Naive thymus-derived CD8-positive, alpha-beta T cell (primary cell): ENCODE measurements at regions of chr12 and their contacts with region 1.

Region 1: DNA sequence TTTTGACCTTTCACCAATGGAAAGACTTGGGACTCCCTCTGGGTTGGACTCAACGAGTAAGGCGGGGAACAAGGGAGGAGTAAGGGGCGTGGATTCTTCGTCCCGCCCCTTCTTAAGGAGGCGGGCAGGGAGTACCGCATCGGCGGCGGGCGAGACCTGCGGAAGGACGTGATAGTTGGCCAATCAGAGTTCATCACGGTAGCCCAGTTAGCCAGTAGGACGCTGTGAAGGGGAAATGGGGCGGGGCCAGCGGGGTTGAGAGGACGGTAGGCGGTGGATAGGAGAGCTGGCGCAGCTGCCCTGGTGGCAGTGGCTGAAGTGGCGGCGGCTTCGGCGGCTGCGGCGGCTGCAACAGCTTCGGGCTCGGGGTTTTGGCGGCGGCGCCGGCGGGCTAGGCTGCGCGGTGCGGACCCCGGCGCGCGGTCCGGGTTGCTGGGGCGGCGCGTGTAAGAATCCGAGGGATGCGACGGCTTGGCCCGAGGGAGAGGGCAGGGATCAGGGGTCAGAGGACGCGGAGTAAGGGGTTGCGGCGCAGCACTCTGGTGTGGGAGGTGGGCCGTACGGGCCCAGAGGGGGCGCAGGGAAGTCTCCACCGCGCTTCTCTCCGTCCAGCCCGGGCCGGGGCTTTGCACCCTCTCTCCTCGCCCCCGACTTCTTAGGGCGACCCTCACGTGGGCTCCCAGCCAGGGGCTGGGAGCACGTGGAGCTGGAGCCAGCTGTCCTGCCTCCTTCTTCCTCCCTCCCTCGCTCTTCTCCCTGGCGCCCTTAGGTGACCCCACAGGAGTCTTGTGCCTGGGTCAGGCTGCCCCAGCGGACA is at the start of gene TPCN1:
- DNase-seq: peak; percentile 95 to 99 (median 98)
- ATAC-seq: peak; percentile 93 to 95
- H3K4me3 Mint-ChIP-seq: peak within 1 kb of the TSS; percentile 85 to 95 (median 92)
- H3K27ac Mint-ChIP-seq: peak within 1 kb of the TSS; percentile 88 to 96 (median 94)
- H3K4me1 Mint-ChIP-seq: peaks cover 20 to 43% (median 41%) of the 10 kb centered on the region in 4 donors
- H3K27me3 Mint-ChIP-seq: no peaks in the 10 kb centered on the region
- polyA plus RNA-seq, gene TPCN1: 6.7 to 16.5 (median 11.0) TPM

Region 2: GRCh38 chr12:112148031-112148513 is 1073.3 kb before region 1 on chr12:
- POLR2A ChIA-PET with region 1: interaction called, 11 read pairs
- DNase-seq: no peak
- ATAC-seq: no peak
- H3K4me3 Mint-ChIP-seq: no peak overlapping the region
- H3K27ac Mint-ChIP-seq: peak overlapping the region in 2 of 10 donors; percentile 44 to 77
- H3K4me1 Mint-ChIP-seq: peaks cover 3 to 13% (median 7%) of the 10 kb centered on the region in 4 donors
- H3K27me3 Mint-ChIP-seq: no peaks in the 10 kb centered on the region

Region 3: DNA sequence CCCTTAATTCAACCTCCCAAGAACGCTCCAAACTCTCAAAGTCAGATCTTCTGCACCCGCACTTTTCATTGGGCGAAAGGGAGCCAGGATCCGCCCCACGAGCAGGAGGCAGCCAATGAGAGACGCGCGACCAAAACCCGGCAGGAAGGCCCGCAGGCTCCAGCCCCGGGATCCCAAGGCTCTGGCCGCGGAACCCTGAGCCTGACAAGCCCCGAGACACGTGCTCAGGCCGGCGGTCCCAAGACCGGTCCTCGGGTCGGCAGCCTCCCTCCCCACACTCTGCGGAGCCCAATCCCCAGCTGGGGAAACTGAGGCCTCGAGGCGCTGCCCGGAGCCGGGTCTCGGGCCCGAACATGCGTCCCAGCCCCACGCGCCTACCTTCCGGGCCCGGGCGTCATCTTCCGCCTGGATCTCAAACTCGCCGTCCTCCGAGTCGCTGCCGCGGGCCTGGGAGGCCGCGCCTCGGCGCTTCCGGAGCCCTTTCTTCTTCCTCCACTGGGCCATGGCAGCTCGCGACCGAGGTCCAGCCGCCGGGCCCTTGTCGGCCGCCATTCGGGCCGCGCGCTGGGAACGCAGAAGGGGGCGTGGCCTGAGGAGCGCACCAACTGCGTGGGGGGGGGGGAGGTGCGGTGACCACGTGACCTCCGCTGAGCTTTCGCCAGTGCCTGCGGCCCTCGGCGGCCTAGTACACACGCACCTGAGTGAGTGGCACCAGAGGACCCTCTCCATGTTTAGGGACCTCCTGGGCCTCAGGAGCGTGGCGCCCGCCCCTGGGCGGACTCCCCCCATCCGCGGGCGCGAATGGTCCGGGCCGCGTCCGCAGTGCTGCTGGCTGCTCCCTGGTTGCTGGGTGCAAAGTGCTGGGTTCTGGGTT is 36.3 kb before region 1 on chr12 and contains the starts of genes DDX54 and RITA1:
- POLR2A ChIA-PET with region 1: interaction called, 19 read pairs
- DNase-seq: peak; percentile 78 to 97 (median 87)
- ATAC-seq: peak; percentile 85 to 87
- H3K4me3 Mint-ChIP-seq: peak within 1 kb of the TSS; percentile 90 to 99 (median 95)
- H3K27ac Mint-ChIP-seq: peak within 1 kb of the TSS; percentile 92 to 98 (median 96)
- H3K4me1 Mint-ChIP-seq: peaks cover 19 to 52% (median 39%) of the 10 kb centered on the region in 4 donors
- H3K27me3 Mint-ChIP-seq: no peaks in the 10 kb centered on the region
- polyA plus RNA-seq, gene DDX54: 17.9 to 38.2 (median 24.3) TPM
- polyA plus RNA-seq, gene RITA1: 22.9 to 26.2 (median 24.6) TPM

Region 4: DNA sequence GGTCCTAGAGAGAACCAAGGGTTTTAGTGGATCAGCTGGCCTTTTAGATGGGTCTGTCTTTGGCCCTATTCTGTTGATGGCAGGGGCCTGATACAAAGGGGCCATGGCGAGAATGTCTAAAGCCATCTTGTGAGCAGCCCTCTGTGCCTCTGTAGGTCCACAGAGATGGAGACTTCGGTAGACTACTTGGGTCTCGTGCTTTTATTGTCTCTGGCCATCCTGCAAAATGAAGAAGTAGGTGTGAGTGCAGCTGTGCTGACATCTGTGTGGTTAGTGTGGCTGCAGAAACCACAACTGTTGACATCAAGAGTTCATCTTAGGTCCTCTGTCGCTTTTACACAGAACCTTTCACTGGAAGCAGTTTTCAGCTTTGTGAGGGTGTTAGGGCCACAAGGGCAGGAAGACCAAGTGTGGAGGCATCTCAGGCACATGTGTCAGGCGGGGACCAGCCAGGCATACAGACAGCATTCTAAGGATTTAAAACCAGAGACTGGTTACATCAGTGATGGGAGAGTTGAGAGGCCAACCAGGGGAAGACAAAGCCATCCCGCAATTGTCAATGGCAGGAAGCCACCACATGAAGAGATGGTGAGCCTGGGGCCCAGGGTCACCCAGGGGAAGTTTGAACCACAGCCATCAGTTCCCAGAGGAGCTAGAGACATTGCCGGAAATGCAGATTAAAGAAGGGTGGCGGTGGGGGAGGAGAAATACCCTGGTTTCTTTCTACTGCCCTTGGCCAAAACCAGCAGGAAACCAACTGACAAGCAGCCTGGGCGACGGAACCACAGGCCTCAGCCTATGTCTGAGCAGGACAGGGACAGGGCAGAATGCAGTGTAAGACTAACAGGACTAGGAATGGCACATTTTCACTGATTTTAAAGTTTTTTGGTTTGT is 13.1 kb before region 1 on chr12:
- POLR2A ChIA-PET with region 1: interaction called, 24 read pairs
- DNase-seq: peak in 9 of 10 donors; percentile 34 to 76 (median 70)
- ATAC-seq: peak; percentile 80 to 81
- H3K4me3 Mint-ChIP-seq: peak overlapping the region; percentile 53 to 84 (median 77)
- H3K27ac Mint-ChIP-seq: peak overlapping the region; percentile 84 to 97 (median 92)
- H3K4me1 Mint-ChIP-seq: peaks cover 21 to 55% (median 41%) of the 10 kb centered on the region in 4 donors
- H3K27me3 Mint-ChIP-seq: no peaks in the 10 kb centered on the region

Region 5: DNA sequence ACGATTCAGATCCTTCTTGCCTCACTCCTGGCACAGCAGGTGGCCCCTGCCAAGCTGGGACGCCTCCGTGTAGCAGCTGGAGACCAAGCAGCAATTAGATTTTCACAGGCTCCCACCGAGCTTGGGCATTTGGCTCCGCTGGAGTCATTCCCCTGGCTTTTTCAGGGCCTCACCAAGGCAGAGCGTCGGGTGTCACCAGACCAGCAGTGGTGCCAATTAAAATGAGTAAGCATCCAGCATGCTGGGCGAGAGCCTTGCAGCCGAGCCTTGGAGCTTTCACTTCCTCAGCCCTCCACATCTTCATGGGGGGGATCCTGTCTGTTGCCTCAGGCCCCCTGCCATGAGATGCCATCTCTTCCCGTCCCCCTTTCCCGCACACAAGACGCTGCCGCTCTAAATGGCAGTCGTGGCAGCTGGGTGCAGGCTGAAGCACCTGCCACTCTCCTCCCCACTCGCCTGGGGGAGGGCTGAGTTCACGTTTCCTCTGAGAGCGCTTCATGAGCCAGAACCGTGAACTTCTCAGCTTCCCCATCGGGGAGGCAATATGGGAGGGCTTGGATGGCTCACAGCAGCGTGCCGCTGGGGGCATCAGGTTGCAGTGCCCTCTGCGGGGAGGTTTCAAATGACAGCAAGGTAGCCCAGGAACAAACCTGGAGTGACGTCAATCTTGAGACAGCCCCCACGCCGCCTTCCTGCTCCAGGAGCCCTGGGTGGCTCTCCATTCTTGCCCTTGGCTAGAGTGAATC is 11.6 kb after region 1 on chr12:
- POLR2A ChIA-PET with region 1: interaction called, 46 read pairs
- DNase-seq: peak; percentile 55 to 87 (median 80)
- ATAC-seq: peak; percentile 96 to 97
- H3K4me3 Mint-ChIP-seq: peak overlapping the region; percentile 73 to 92 (median 90)
- H3K27ac Mint-ChIP-seq: peak overlapping the region; percentile 73 to 96 (median 93)
- H3K4me1 Mint-ChIP-seq: peaks cover 20 to 74% (median 63%) of the 10 kb centered on the region in 4 donors
- H3K27me3 Mint-ChIP-seq: no peaks in the 10 kb centered on the region

Region 6: DNA sequence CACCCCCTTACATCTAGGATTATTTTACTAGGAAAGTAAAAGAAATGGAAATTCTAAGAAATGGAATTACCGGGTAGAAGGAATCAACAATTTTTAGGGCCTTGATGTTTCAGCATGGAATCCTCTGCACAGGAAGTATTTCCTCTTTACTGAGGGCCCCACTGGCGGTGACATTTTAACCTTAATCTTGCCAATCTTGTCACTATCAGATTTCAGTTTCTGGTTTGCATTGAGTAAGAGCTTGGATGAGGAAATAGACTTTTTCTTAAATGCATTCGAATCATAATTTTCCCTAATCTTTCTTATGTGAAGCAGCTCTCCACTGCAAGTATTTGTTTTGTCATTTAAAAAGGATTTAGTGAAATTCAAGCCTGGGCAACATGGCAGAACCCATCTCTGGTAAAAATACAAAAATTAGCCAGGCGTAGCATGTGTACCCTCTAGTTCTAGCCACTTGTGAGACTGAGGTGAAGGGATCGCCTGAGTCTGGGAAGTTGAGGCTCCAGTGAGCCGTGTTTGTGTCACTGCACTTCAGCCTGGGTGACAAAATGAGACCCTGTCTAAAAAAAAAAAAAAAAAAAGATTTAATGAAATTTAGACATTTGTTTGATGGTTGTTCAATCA is 40.6 kb after region 1 on chr12:
- POLR2A ChIA-PET with region 1: interaction called, 12 read pairs
- DNase-seq: peak in 3 of 10 donors; percentile 13 to 35 (median 30)
- ATAC-seq: peak; percentile 37 to 67
- H3K4me3 Mint-ChIP-seq: peak overlapping the region in 9 of 10 donors; percentile 40 to 80 (median 67)
- H3K27ac Mint-ChIP-seq: peak overlapping the region; percentile 69 to 92 (median 85)
- H3K4me1 Mint-ChIP-seq: peaks cover 18 to 48% (median 42%) of the 10 kb centered on the region in 4 donors
- H3K27me3 Mint-ChIP-seq: no peaks in the 10 kb centered on the region